Natural killer cell (primary cell): ENCODE measurements at regions of chr9 and their contacts with region 1.

Region 1: DNA sequence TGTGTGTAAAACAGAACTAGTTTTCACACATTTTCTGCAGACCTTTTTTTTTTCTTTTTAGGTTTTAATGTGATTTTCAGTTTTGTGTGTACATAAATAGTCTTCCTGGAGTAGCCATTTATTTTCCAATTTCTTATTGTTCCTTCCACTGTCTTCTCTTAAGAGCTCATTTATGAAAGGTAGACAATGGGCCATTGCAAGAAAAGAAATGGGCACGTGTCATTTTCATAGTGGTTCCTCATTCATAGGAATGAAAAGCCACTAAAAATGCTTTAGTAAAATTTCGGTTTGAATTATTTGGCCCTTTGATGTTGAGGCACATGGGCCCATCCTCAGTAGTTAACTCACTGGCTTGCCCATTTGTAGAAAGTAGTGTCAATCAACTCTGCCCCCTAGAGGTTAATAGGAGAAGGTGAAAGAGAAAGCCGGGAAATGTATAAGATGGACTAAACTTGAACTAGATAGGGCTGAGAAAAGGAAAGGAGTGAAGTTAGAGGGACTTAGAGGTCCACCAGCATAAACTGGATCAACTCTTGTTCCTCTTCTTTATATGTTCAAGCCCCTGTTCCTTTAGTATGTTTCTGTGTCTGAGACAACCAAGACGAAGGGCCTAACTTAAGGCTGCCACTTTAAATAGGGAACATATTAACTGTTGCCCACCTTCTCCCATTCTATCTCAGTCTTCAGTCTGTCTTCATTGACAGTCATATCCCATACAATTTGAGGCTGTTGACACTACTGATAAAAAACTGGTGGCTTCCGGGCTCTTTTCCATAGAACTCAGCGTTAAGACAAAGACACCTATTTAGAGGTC is 72.6 kb downstream of the SMARCA2 start:
- DNase-seq: peak in 1 of 2 donors; percentile 72
- ATAC-seq: peak; percentile 87 to 88 (median 88)
- H3K4me3 ChIP-seq: no peak overlapping the region
- H3K4me3 Mint-ChIP-seq: no peak overlapping the region
- H3K27ac ChIP-seq: no peak overlapping the region
- H3K27ac Mint-ChIP-seq: peak overlapping the region; percentile 6 to 68
- H3K4me1 ChIP-seq: no peaks in the 10 kb centered on the region
- H3K4me1 Mint-ChIP-seq: peaks cover 12 to 17% of the 10 kb centered on the region in 2 donors
- H3K27me3 ChIP-seq: no peaks in the 10 kb centered on the region
- H3K27me3 Mint-ChIP-seq: no peaks in the 10 kb centered on the region
- CTCF ChIP-seq: peak; percentile 85

Region 2: DNA sequence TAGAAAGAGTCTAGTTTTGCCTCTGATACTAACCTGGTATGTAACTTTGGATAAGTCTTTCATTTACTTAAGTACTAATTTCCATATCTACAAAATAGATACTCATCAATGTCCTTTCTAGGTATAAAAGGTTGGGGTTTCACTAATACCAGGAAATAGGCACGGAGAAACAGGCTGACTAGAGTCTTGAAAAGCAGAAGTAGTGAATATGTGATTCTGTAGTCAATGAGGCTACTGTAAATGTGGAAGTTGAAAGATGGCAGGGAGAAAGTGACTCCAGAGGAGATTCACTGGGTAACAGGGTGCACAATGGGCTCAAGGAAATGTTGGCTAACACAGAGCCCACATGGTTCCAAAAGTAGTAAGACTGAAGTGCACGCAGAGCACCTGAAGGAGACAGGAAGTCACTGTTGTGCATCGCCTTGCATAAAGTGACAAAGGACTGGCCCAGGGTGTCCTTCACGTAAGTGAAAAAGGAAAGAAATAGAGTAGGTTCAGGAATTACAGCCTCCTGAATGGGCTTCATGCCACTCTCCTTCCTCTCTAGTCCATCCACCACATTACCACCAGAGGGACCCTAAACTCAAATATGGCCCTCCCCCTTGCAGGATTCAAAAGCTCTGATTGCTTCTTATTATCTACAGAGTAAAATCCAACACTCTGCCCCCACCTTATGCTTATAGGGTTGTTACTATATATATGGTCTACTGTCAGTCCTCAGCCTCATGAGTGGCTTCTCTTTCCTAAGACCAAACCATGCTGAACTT is 360.5 kb before region 1 on chr9:
- intact Hi-C with region 1: loop called (anchors 5 kb)
- DNase-seq: peak in 1 of 2 donors; percentile 43
- ATAC-seq: peak in 1 of 3 donors; percentile 17
- H3K4me3 ChIP-seq: no peak overlapping the region
- H3K4me3 Mint-ChIP-seq: no peak overlapping the region
- H3K27ac ChIP-seq: no peak overlapping the region
- H3K27ac Mint-ChIP-seq: no peak overlapping the region
- H3K4me1 ChIP-seq: no peaks in the 10 kb centered on the region
- H3K4me1 Mint-ChIP-seq: no peaks in the 10 kb centered on the region
- H3K27me3 ChIP-seq: no peaks in the 10 kb centered on the region
- H3K27me3 Mint-ChIP-seq: peaks cover 5 to 6% of the 10 kb centered on the region in 2 donors
- CTCF ChIP-seq: no peak

Region 3: GRCh38 chr9:1939926-1940368 is 147.8 kb before region 1 on chr9:
- intact Hi-C with region 1: loop called (anchors 1 kb)
- DNase-seq: peak in 1 of 2 donors; percentile 56
- ATAC-seq: peak in 2 of 3 donors; percentile 48 to 65
- H3K4me3 ChIP-seq: no peak overlapping the region
- H3K4me3 Mint-ChIP-seq: no peak overlapping the region
- H3K27ac ChIP-seq: no peak overlapping the region
- H3K27ac Mint-ChIP-seq: no peak overlapping the region
- H3K4me1 ChIP-seq: no peaks in the 10 kb centered on the region
- H3K4me1 Mint-ChIP-seq: no peaks in the 10 kb centered on the region
- H3K27me3 ChIP-seq: no peaks in the 10 kb centered on the region
- H3K27me3 Mint-ChIP-seq: peaks cover 5 to 11% of the 10 kb centered on the region in 2 donors
- CTCF ChIP-seq: peak; percentile 43